Activated B cell treated with CpG ODN at 0.5 μM for 24 hours (primary cell): ENCODE measurements at regions of chr7 and their contacts with region 1.

Region 1: DNA sequence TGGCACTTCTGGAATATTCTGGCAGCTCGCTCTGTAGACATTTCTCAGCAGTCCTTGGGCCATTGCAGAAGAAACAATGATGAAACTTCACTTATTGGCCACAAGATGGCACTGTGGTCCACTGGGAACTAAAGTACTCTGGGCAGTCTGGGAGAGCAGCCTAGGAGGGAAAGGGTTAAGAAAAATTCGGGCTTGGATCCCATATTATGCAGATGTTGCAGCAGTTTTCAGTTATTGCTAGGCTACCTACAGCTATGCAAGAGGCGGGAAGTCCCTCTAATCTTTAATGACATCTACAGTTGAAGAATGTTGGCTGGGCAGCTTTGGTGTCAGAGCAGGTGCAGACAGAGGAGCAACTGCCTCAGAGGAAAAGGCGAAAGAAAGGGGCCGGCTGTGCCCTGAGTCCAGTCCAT is 201.7 kb upstream of the PRSS58 start:
- DNase-seq: no peak
- ATAC-seq: no peak
- H3K4me3 Mint-ChIP-seq: no peak overlapping the region
- H3K27ac Mint-ChIP-seq: no peak overlapping the region
- H3K4me1 Mint-ChIP-seq: peaks cover 3% of the 10 kb centered on the region
- H3K27me3 Mint-ChIP-seq: peaks cover 32% of the 10 kb centered on the region
- CTCF ChIP-seq: no peak

Region 2: GRCh38 chr7:142471820-142472219 is 12.3 kb after region 1 on chr7:
- CTCF ChIA-PET with region 1: interaction called, 5 read pairs
- POLR2A ChIA-PET with region 1: no interaction called
- intact Hi-C with region 1: loop called (anchors 2 kb)
- DNase-seq: no peak
- ATAC-seq: no peak
- H3K4me3 Mint-ChIP-seq: no peak overlapping the region
- H3K27ac Mint-ChIP-seq: no peak overlapping the region
- H3K4me1 Mint-ChIP-seq: peaks cover 5% of the 10 kb centered on the region
- H3K27me3 Mint-ChIP-seq: peaks cover 26% of the 10 kb centered on the region
- CTCF ChIP-seq: no peak

Region 3: DNA sequence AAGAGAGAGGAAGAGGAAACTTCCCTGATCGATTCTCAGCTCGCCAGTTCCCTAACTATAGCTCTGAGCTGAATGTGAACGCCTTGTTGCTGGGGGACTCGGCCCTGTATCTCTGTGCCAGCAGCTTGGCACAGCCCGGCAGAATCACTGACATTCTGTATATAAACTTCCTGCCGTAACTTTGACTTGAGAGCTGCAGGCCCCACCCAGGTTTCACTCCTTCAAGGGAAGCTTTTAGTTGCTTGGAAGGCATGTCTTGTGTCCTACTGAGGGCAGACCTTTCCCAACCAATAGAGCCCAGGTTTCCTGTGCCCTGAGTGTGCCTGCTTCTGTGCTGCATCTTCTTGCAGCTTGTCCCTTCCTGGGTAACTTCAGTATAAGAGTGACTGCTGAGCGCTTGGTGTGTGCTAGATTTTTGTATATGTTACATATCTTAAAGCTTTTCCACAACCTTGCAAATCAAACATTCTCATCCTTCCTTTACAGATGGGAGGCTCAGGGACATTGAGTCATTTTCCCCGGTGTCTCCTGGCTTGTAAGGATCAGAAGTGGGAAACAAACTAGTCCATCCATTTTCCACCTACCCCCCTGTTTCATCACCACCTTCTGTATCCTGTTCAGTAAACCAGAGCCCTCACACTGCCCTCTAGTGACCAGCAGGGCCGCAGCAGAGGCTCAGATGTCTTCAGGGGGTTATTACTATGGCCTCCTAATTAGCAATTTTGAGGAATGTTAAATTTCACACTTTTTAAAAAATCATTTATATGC is 23.5 kb after region 1 on chr7:
- CTCF ChIA-PET with region 1: interaction called, 5 read pairs
- POLR2A ChIA-PET with region 1: no interaction called
- intact Hi-C with region 1: loop called (anchors 1 kb)
- DNase-seq: no peak
- ATAC-seq: peak; percentile 72
- H3K4me3 Mint-ChIP-seq: no peak overlapping the region
- H3K27ac Mint-ChIP-seq: no peak overlapping the region
- H3K4me1 Mint-ChIP-seq: peaks cover 25% of the 10 kb centered on the region
- H3K27me3 Mint-ChIP-seq: peaks cover 11% of the 10 kb centered on the region
- CTCF ChIP-seq: no peak

Region 4: GRCh38 chr7:142523821-142524460 is 64.4 kb after region 1 on chr7:
- CTCF ChIA-PET with region 1: interaction called, 3 read pairs
- POLR2A ChIA-PET with region 1: no interaction called
- intact Hi-C with region 1: loop called (anchors 1 kb)
- DNase-seq: no peak
- ATAC-seq: no peak
- H3K4me3 Mint-ChIP-seq: no peak overlapping the region
- H3K27ac Mint-ChIP-seq: no peak overlapping the region
- H3K4me1 Mint-ChIP-seq: no peaks in the 10 kb centered on the region
- H3K27me3 Mint-ChIP-seq: peaks cover 23% of the 10 kb centered on the region
- CTCF ChIP-seq: no peak

Region 5: DNA sequence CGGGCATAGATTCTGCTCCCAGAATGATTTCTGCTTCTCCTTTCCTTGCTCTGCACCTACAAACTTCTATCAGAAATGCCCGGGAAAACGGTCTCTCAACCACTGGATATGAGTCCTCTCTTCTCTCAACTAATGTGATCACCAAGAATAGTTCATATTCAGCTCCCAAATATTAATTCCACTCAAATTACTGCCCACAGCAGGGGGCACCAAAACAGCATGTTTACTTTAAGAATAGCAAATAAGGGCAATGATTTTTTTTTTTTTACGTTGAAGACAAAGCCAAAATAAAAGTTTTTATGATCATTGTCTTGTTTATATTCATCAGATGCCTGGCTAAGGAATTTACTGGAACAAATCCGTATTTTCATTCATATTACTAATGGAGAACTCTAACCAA is 194.8 kb after region 1 on chr7:
- CTCF ChIA-PET with region 1: no interaction called
- POLR2A ChIA-PET with region 1: no interaction called
- intact Hi-C with region 1: no loop called
- DNase-seq: no peak
- ATAC-seq: no peak
- H3K4me3 Mint-ChIP-seq: no peak overlapping the region
- H3K27ac Mint-ChIP-seq: no peak overlapping the region
- H3K4me1 Mint-ChIP-seq: no peaks in the 10 kb centered on the region
- H3K27me3 Mint-ChIP-seq: peaks cover 7% of the 10 kb centered on the region
- CTCF ChIP-seq: no peak